ENCODE measurements at regions of chr14 and their contacts with region 1.

Region 1: GRCh38 chr14:60648934-60649874 is at the start of gene SIX1:
- DNase-seq: peak; percentile 86 to 92
- ATAC-seq: peak; percentile 78 to 90 (median 84)
- H3K4me3 ChIP-seq: peak within 1 kb of the TSS; percentile 91
- H3K27ac ChIP-seq: peak within 1 kb of the TSS; percentile 93
- H3K4me1 ChIP-seq: peaks cover 13% of the 10 kb centered on the region
- H3K27me3 ChIP-seq: no peaks in the 10 kb centered on the region
- CTCF ChIP-seq: no peak
- total RNA-seq, gene SIX1: 38.5 to 58.0 (median 43.4) TPM

Region 2: DNA sequence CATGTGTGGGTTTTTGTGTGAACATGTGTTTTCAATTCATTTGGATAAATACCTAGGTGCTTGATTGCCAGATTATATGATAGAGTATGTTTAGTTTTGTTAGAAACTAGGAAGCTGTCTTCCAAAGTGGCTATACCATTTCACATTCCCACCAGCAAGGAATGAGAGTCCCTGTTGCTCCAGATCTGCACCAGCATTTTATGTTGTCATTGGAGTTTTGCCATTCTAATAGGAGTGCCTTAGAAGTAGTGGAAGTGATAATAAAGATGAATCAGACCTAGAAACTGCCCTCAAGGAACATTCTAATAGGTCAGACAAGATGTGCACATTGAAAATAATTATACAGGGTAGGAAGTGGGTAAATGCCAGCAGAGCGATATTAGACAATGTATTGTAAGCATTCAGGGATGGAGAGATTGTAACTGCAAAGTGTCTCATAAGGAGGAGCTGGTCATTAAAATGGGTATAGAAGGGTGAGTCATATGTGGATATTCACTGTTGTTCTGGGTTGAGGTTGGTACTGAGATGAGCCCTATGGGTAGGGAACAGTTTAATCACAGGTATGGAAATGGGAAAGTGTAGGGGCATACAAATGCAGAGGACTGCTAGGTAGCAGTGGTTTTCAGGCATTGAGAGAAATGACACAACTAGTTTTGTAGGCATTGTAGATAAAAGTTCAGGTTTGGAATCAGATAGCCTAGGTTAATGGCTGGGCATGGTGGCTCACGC is 156.8 kb after region 1 on chr14:
- intact Hi-C with region 1: loop called in 1 of 2 experiments (anchors 5 kb)
- DNase-seq: no peak
- ATAC-seq: peak in 1 of 4 donors; percentile 17
- H3K4me3 ChIP-seq: no peak overlapping the region
- H3K27ac ChIP-seq: peak overlapping the region; percentile 88
- H3K4me1 ChIP-seq: peaks cover 26% of the 10 kb centered on the region
- H3K27me3 ChIP-seq: no peaks in the 10 kb centered on the region
- CTCF ChIP-seq: no peak

Region 3: GRCh38 chr14:60980811-60981632 is 331.8 kb after region 1 on chr14 and contains the starts of genes SLC38A6 and TRMT5:
- intact Hi-C with region 1: loop called (anchors 5 kb)
- DNase-seq: peak; percentile 94 to 97
- ATAC-seq: peak; percentile 95 to 97 (median 96)
- H3K4me3 ChIP-seq: peak within 1 kb of the TSS; percentile 94
- H3K27ac ChIP-seq: peak within 1 kb of the TSS; percentile 98
- H3K4me1 ChIP-seq: peaks cover 43% of the 10 kb centered on the region
- H3K27me3 ChIP-seq: no peaks in the 10 kb centered on the region
- CTCF ChIP-seq: no peak
- total RNA-seq, gene SLC38A6: 4.9 to 11.9 (median 6.6) TPM
- total RNA-seq, gene TRMT5: 9.7 to 26.0 (median 12.8) TPM

Region 4: DNA sequence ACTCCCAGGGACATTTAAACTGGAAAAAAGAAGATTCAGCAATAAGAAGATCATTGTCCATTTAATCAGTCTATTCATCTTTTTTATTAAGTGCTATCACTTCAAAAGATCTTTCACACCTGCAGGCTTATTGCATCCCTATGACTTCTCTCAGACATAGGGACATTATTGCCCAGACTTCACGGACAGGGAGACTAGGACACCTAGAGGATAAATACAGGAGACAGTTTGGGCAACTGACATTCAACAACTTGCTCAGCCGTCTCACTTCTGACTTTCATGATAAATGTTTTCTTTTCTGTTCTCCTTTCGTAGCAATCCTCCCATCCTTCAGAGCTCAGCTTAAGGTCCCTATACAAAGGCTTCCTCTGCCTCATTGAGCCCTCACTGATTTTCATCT is 547.6 kb after region 1 on chr14:
- intact Hi-C with region 1: loop called (anchors 5 kb)
- DNase-seq: no peak
- ATAC-seq: peak; percentile 72 to 87 (median 84)
- H3K4me3 ChIP-seq: no peak overlapping the region
- H3K27ac ChIP-seq: peak overlapping the region; percentile 71
- H3K4me1 ChIP-seq: peaks cover 15% of the 10 kb centered on the region
- H3K27me3 ChIP-seq: no peaks in the 10 kb centered on the region
- CTCF ChIP-seq: peak; percentile 51